ENCODE measurements at regions of chr15 and their contacts with region 1.

Region 1: DNA sequence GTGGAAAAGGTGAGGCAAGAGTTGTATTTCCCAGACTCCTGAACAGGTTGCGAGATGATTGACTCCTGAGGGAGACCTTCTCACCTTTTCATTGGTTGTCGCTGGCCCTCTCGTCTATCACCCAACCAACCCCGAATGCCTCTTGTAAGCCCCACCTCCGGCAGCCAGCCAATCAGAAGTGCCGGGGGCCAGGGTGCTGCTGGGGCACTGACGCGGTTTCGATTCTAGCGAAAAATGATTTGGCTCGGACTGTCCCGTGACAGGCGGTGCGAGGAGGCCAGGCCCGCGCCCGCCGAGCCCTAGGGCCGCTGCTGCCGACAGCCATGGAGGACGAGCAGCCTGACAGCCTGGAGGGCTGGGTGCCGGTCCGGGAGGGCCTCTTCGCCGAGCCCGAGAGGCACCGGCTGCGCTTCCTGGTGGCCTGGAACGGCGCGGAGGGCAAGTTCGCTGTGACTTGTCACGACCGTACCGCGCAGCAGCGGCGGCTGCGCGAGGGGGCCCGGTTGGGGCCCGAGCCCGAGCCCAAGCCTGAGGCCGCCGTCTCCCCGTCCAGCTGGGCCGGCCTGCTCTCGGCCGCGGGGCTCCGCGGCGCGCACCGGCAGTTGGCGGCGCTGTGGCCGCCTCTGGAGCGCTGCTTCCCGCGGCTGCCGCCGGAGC is at the start of gene WHAMM:
- DNase-seq: peak; percentile 97
- H3K4me3 Mint-ChIP-seq: peak within 1 kb of the TSS; percentile 82
- H3K27ac Mint-ChIP-seq: peak within 1 kb of the TSS; percentile 81
- H3K4me1 Mint-ChIP-seq: peaks cover 41% of the 10 kb centered on the region
- H3K27me3 Mint-ChIP-seq: no peaks in the 10 kb centered on the region
- total RNA-seq, gene WHAMM: 4.2 to 5.3 TPM

Region 2: GRCh38 chr15:82749951-82750830 is 59.3 kb before region 1 on chr15:
- CTCF ChIA-PET with region 1: interaction called, 9 read pairs
- POLR2A ChIA-PET with region 1: interaction called, 15 read pairs
- intact Hi-C with region 1: loop called (anchors 1 kb)
- DNase-seq: peak; percentile 92
- H3K4me3 Mint-ChIP-seq: peak overlapping the region; percentile 96
- H3K27ac Mint-ChIP-seq: peak overlapping the region; percentile 93
- H3K4me1 Mint-ChIP-seq: peaks cover 41% of the 10 kb centered on the region
- H3K27me3 Mint-ChIP-seq: no peaks in the 10 kb centered on the region

Region 3: GRCh38 chr15:82894971-82895520 is 85.5 kb after region 1 on chr15:
- CTCF ChIA-PET with region 1: no interaction called
- POLR2A ChIA-PET with region 1: no interaction called
- intact Hi-C with region 1: no loop called
- DNase-seq: no peak
- H3K4me3 Mint-ChIP-seq: no peak overlapping the region
- H3K27ac Mint-ChIP-seq: no peak overlapping the region
- H3K4me1 Mint-ChIP-seq: no peaks in the 10 kb centered on the region
- H3K27me3 Mint-ChIP-seq: peaks cover 7% of the 10 kb centered on the region

Region 4: GRCh38 chr15:82952158-82953081 is 142.9 kb after region 1 on chr15 and contains the start of gene HOMER2:
- CTCF ChIA-PET with region 1: no interaction called
- POLR2A ChIA-PET with region 1: no interaction called
- intact Hi-C with region 1: loop called (anchors 2 kb)
- DNase-seq: peak; percentile 16
- H3K4me3 Mint-ChIP-seq: peak within 1 kb of the TSS; percentile 73
- H3K27ac Mint-ChIP-seq: no peak within 1 kb of the TSS
- H3K4me1 Mint-ChIP-seq: no peaks in the 10 kb centered on the region
- H3K27me3 Mint-ChIP-seq: peaks cover 8% of the 10 kb centered on the region
- total RNA-seq, gene HOMER2: 6.5 to 7.9 TPM

Region 5: DNA sequence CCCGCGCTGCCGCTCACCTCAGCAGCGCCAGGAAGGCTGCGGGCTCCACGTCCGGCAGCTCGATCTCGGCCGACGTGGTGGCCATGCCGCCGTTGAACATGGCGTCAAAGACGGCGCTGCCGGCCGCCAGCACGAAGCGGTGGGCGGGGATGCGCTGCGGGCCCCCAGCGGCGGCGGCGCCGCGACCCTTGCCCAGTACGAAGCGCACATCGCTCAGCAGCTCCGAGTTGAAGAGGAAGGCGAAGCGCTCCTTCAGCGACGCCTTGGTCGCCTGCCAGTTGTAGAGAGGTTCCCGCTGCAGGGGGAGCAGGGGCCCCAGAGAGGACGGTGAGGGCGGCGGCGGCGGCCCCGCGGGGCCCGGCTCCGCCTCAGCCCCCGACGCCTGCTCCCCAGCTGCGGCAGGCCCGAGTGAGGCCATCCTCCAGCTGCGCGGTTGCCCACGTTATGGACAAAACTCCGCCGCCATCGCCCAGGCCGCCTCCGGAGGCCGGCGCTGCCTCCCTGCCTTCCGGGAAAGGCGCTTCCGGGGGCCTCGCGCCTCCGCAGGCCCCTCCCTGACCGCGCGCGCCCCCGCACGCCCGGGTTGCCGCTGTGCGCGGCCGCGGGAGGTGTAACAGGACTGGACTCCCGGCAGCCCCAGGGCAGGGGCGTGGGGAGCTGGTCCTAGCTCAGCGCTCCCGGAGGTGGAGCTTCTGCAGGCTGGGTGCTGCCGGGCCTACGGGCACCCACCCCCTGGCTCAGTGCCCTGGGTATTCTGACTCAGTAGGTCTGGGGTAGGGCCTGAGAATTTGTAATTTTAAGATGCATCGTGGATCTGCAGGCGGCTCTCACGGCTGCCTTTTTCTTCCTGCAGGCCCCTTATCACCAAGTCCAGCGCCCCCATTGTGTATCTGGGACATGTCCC is 257.5 kb after region 1 on chr15 and contains the start of gene BTBD1:
- CTCF ChIA-PET with region 1: no interaction called
- POLR2A ChIA-PET with region 1: no interaction called
- intact Hi-C with region 1: loop called (anchors 2 kb)
- DNase-seq: peak; percentile 96
- H3K4me3 Mint-ChIP-seq: peak within 1 kb of the TSS; percentile 86
- H3K27ac Mint-ChIP-seq: peak within 1 kb of the TSS; percentile 85
- H3K4me1 Mint-ChIP-seq: peaks cover 27% of the 10 kb centered on the region
- H3K27me3 Mint-ChIP-seq: no peaks in the 10 kb centered on the region
- total RNA-seq, gene BTBD1: 52.9 to 53.3 TPM